ENCODE measurements at regions of chr7 and their contacts with region 1.

Region 1: DNA sequence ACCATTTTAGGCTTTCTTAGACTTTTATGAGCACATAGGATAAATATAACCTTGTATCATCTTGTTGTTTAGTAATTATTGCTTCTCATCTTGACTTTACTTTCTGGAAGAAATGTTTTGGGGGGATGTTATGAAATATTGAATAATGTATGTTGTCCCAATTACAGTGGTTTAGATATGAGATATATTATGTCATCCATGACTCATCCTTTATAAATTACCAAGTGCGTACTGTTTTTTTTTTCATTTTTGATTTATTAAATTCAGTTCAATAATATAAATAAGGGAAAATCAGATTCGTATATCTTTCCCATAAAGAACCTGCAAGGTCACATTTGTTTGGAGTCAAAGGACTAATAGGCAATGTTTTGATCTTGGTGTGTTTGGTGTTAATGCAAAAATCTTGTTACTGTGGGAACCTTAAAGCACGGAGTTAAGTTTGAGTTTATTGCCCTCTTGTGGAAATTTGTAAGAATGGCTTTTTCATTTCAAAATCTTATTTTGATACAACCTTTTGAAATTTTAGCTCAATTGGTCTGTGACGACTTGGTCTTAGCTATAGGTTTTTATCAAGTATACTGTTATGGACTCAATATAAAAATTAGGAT is 108.6 kb downstream of the SRI start:
- DNase-seq: no peak
- H3K4me3 Mint-ChIP-seq: no peak overlapping the region
- H3K27ac Mint-ChIP-seq: no peak overlapping the region
- H3K4me1 Mint-ChIP-seq: peaks cover 4% of the 10 kb centered on the region
- H3K27me3 Mint-ChIP-seq: no peaks in the 10 kb centered on the region

Region 2: GRCh38 chr7:87506246-87507180 is 604.7 kb before region 1 on chr7:
- intact Hi-C with region 1: loop called (anchors 5 kb)
- DNase-seq: no peak
- H3K4me3 Mint-ChIP-seq: no peak overlapping the region
- H3K27ac Mint-ChIP-seq: no peak overlapping the region
- H3K4me1 Mint-ChIP-seq: peaks cover 12% of the 10 kb centered on the region
- H3K27me3 Mint-ChIP-seq: no peaks in the 10 kb centered on the region

Region 3: DNA sequence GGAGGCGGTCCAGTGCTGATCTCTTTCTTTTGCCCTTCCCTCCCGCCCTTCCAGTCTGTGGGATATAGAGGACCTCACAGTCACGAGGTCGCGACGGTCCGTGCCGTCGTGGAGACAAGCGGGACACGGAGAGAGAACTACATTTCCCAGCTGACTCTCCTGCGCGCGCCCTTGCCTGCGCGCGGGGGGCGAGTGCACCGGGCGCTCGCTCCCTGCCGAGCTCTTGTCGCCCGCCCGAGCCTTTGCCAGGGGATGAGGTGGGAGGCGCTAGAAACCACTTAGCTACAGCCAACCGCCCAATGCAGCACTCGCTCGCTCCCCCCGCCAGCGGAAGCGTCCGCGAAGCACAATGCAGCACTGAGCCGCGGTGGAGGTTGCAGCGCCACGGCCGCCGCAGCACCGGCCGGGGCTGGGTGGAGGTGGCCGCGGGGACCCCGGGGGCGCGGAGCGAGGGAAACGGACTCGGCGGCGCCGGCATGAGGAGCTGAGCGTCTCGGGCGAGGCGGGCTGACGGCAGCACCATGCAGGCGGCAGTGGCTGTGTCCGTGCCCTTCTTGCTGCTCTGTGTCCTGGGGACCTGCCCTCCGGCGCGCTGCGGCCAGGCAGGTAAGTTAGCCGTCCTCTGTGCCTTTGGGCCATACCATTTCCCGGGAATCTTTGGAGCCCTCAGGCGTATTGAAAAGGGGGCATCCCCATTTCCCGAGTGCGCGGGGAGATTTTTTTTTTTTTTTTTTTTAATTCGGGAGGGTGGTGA is 177.1 kb before region 1 on chr7 and contains the start of gene ADAM22:
- intact Hi-C with region 1: loop called (anchors 10 kb)
- DNase-seq: peak; percentile 91
- H3K4me3 Mint-ChIP-seq: peak within 1 kb of the TSS; percentile 90
- H3K27ac Mint-ChIP-seq: peak within 1 kb of the TSS; percentile 57
- H3K4me1 Mint-ChIP-seq: peaks cover 9% of the 10 kb centered on the region
- H3K27me3 Mint-ChIP-seq: peaks cover 50% of the 10 kb centered on the region
- total RNA-seq, gene ADAM22: 1.5 and 1.7 TPM in 2 replicates

Region 4: GRCh38 chr7:88092676-88092999 is 18.6 kb before region 1 on chr7:
- intact Hi-C with region 1: no loop called
- DNase-seq: no peak
- H3K4me3 Mint-ChIP-seq: no peak overlapping the region
- H3K27ac Mint-ChIP-seq: no peak overlapping the region
- H3K4me1 Mint-ChIP-seq: no peaks in the 10 kb centered on the region
- H3K27me3 Mint-ChIP-seq: peaks cover 2% of the 10 kb centered on the region

Measured in activated CD4-positive, alpha-beta T cell treated with anti-CD3 and anti-CD28 coated beads, Interleukin-2, amount 10 ng/mL, durations not matched to agents 24 days and 14 days (primary cell).